Activated CD4-positive, alpha-beta T cell treated with anti-CD3 and anti-CD28 coated beads for 36 hours (primary cell): ENCODE measurements at regions of chr3 and their contacts with region 1.

Region 1: DNA sequence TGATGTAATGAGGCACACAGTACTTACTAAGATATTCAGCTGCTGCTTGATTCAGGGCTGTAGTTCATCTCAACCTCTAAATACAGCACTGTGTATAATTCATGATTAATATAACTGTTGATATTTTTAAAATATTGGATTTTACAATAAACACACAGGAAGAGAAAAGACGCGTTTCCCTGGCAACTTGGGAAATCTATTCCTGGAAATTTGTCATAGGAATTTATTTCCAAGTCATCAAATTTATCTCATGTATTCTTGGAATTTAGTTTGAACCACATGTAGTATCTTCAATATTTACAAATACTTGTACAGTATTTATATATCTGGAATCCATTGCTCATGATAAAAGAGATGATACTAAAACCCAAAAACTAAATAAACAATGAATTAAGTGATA is 30.6 kb downstream of the EPHA3 start:
- DNase-seq: no peak
- ATAC-seq: no peak
- H3K4me3 Mint-ChIP-seq: no peak overlapping the region
- H3K27ac Mint-ChIP-seq: no peak overlapping the region
- H3K4me1 Mint-ChIP-seq: no peaks in the 10 kb centered on the region
- H3K27me3 Mint-ChIP-seq: no peaks in the 10 kb centered on the region

Region 2: DNA sequence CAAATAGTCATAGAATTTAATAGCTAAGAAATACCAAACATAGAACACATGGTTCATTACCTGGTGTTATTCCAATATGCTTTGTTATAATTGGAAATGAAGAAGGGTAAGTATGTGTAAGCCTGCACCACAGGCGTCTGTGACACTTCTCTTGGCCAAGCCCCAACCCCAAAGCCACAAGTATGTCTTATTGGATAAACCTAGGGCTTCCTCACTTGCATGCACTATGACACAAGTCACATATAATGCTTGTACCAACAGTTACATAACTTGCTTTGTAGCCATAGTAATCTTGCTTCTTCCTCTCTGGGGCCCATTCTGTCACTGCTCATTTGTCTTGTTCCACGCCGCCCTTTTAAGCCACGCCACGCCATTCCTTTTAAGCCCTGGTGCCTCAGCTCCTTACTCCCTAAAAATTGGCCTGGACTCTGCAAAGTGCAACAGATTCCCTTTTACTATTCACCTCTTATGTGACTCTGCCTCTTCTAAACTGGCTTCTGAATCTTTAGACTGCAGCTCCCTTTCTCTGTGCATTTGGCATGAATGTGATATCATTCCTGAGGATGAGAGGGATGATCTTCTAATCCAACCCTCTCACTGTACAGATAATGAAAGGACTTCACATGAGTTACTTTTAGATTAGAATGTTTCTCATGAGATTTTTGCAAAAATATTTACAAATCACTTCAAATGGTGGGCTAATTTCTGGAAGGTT is 78.7 kb before region 1 on chr3:
- CTCF ChIA-PET with region 1: no interaction called
- POLR2A ChIA-PET with region 1: no interaction called
- intact Hi-C with region 1: no loop called
- DNase-seq: no peak
- ATAC-seq: no peak
- H3K4me3 Mint-ChIP-seq: no peak overlapping the region
- H3K27ac Mint-ChIP-seq: no peak overlapping the region
- H3K4me1 Mint-ChIP-seq: no peaks in the 10 kb centered on the region
- H3K27me3 Mint-ChIP-seq: no peaks in the 10 kb centered on the region

Region 3: DNA sequence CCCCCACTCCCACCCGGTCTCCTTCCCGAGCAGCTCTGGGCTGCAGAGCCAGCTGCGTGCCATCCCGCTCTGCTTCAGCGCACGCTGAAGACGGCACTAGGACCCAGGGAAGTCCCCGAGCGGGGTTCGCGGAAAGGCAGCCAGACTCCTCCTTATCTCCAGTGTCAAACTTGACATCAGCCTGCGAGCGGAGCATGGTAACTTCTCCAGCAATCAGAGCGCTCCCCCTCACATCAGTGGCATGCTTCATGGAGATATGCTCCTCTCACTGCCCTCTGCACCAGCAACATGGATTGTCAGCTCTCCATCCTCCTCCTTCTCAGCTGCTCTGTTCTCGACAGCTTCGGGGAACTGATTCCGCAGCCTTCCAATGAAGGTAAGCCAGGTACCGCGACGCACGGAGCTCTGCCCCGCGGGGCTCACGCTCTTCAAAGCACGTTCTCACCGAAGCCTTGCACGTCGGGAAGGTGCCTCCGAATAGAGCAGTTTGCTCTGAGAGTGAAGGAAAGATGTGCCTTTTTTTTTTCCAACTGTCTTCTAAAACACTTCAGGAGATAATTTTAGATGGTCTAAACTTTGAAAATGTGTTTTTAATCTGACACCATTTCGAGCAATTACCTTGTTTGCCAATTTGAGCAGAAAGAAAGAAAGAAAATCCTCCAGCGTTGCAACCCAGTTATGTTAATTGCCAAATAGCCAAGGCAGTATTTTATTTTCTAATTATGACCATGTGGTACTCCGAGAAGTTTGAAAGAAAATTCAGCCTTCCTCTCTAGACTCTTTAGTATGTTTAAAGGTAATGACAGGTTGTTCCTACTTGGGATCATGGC is 30.4 kb before region 1 on chr3 and contains the start of gene EPHA3:
- CTCF ChIA-PET with region 1: no interaction called
- POLR2A ChIA-PET with region 1: interaction called, 13 read pairs
- intact Hi-C with region 1: no loop called
- DNase-seq: peak; percentile 76
- ATAC-seq: peak; percentile 94
- H3K4me3 Mint-ChIP-seq: peak within 1 kb of the TSS; percentile 62
- H3K27ac Mint-ChIP-seq: no peak within 1 kb of the TSS
- H3K4me1 Mint-ChIP-seq: peaks cover 16% of the 10 kb centered on the region
- H3K27me3 Mint-ChIP-seq: peaks cover 28% of the 10 kb centered on the region
- total RNA-seq, gene EPHA3: 0.07 to 0.09 TPM